ENCODE measurements at regions of chr1 and their contacts with region 1.

Region 1: GRCh38 chr1:109347511-109347910 is 40.7 kb upstream of the MYBPHL start:
- DNase-seq: no peak

Region 2: DNA sequence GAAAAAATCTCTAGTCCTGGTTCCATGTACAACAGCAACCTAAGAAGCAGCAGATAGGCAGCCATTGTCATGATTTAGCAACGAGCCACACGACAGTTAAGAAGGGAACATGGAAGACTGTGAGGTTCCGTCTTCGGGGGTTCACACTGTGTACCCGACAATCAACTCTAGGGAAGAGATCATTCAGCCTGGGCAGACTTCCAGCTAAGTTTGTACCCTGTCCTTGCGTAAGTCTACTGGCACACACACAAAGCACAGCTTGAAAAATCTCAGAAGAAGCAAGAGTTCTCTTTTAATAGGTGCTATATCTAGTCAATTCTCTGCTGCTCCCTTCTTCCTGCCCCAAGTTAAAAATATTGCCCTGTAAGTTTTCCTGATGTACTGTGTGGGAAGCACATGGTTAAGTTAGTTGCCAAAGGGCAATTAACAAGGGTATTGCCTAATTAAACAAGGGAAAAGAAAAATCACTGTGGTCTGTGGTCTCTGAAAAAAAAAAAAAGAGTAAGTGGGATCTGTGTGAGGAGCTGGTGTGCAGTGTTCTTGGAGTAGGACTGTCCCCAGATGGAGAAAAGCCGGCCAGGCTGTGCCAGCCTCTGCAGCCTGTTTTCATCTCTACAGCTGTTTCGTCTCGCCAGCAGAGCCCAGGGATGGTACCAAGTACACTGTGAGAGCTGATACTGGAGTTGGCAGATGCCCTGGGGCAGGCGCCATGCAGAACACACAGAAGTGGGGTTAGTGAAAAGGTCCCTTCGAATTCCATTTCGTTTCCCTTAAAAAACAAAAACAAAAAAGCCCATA is 34.3 kb before region 1 on chr1:
- intact Hi-C with region 1: loop called (anchors 5 kb)
- DNase-seq: no peak

Region 3: DNA sequence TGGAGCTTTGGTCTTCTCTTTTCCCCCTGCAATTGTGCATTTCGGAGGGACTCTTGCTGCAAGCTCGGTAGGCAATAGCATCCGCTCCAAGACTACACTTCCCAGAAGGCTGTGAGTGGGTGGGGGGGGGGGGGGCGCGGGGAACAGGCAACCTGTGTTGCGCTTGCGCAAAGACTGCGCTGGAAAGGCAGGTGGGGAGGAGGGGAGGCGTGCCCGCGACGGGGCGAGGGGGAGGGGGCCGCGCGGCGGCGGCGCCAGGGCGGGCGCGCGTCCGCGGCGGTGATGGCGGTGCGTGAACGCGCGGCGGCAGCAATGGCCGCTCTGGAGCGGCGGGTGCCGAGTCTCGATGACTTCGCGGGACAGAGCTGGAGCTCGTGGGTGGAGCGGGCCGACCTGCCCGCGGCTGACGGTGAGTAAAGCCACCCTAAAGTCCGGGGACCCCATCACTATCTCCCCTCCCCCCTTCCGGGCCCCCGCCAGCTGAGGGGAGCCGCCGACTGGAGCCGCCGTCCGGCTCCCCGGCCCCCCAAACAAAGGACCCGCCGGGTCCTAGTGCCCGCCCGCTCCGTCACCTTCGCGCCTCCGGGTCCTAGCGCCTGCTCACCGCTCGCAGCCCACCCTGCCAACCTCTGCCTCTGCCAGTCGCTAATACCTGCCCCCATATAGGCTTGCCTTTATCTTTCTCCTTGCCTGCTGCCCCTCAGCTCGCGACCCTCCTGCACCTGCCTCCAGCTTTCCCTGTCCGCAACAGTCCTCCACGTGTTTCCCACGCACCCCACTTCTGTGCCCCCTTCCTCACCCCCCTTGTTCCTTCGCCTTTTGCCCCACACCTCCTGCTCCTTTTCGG is 136.4 kb after region 1 on chr1 and contains the start of gene ATXN7L2:
- intact Hi-C with region 1: no loop called
- DNase-seq: peak; percentile 95
- total RNA-seq, gene ATXN7L2: 3.8 TPM

Measured in cardiac septum (tissue), 1 donor.